Activated CD4-positive, alpha-beta T cell treated with anti-CD3 and anti-CD28 coated beads, Interleukin-2, amount 10 ng/mL, durations not matched to agents 24 days and 14 days (primary cell): ENCODE measurements at regions of chr21 and their contacts with region 1.

Region 1: GRCh38 chr21:36141513-36141925 is 6.6 kb downstream of the CBR3 start:
- DNase-seq: peak; percentile 95
- H3K4me3 Mint-ChIP-seq: no peak overlapping the region
- H3K27ac Mint-ChIP-seq: peak overlapping the region; percentile 18
- H3K4me1 Mint-ChIP-seq: peaks cover 23% of the 10 kb centered on the region
- H3K27me3 Mint-ChIP-seq: no peaks in the 10 kb centered on the region

Region 2: DNA sequence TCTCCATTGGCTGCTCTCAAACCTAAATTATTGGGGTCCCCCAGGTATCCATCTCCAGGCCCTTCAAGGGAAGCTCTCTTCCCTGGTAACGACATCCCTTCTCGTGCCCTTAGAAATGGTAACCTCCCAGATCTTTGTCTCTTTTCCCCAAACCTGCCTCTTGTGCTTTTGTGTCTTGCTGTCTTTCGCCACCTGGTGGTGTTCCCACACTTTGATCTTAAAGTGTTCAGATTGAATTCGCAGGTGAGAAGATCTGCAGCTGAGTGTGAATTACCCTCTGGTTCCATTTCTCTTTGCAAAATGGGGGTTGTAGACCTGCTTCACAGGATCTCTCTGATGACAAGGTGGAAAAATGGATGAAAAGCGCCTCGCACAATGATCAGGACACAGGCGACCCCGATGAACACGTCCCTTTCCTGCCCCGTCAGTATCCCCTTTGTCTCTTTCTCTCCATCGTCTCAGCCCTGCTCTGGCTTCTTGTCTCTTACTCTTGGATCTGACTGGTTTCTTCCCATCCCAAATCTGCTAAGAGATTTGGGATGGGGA is 68.2 kb after region 1 on chr21:
- intact Hi-C with region 1: loop called (anchors 1 kb)
- DNase-seq: peak; percentile 87
- H3K4me3 Mint-ChIP-seq: no peak overlapping the region
- H3K27ac Mint-ChIP-seq: no peak overlapping the region
- H3K4me1 Mint-ChIP-seq: peaks cover 22% of the 10 kb centered on the region
- H3K27me3 Mint-ChIP-seq: no peaks in the 10 kb centered on the region

Region 3: GRCh38 chr21:36330904-36331303 is 189.4 kb after region 1 on chr21:
- intact Hi-C with region 1: loop called (anchors 1 kb)
- DNase-seq: peak; percentile 83
- H3K4me3 Mint-ChIP-seq: no peak overlapping the region
- H3K27ac Mint-ChIP-seq: peak overlapping the region; percentile 31
- H3K4me1 Mint-ChIP-seq: peaks cover 27% of the 10 kb centered on the region
- H3K27me3 Mint-ChIP-seq: no peaks in the 10 kb centered on the region

Region 4: GRCh38 chr21:36385233-36386030 is 243.9 kb after region 1 on chr21 and contains the start of gene CHAF1B:
- intact Hi-C with region 1: loop called (anchors 5 kb)
- DNase-seq: peak; percentile 96
- H3K4me3 Mint-ChIP-seq: peak within 1 kb of the TSS; percentile 84
- H3K27ac Mint-ChIP-seq: peak within 1 kb of the TSS; percentile 71
- H3K4me1 Mint-ChIP-seq: peaks cover 19% of the 10 kb centered on the region
- H3K27me3 Mint-ChIP-seq: no peaks in the 10 kb centered on the region
- total RNA-seq, gene CHAF1B: 33.4 and 36.5 TPM in 2 replicates

Region 5: GRCh38 chr21:36692835-36693488 is 551.4 kb after region 1 on chr21:
- intact Hi-C with region 1: no loop called
- DNase-seq: no peak
- H3K4me3 Mint-ChIP-seq: no peak overlapping the region
- H3K27ac Mint-ChIP-seq: no peak overlapping the region
- H3K4me1 Mint-ChIP-seq: peaks cover 3% of the 10 kb centered on the region
- H3K27me3 Mint-ChIP-seq: peaks cover 84% of the 10 kb centered on the region